H1 (cell line): ENCODE measurements at regions of chr17 and their contacts with region 1.

Region 1: DNA sequence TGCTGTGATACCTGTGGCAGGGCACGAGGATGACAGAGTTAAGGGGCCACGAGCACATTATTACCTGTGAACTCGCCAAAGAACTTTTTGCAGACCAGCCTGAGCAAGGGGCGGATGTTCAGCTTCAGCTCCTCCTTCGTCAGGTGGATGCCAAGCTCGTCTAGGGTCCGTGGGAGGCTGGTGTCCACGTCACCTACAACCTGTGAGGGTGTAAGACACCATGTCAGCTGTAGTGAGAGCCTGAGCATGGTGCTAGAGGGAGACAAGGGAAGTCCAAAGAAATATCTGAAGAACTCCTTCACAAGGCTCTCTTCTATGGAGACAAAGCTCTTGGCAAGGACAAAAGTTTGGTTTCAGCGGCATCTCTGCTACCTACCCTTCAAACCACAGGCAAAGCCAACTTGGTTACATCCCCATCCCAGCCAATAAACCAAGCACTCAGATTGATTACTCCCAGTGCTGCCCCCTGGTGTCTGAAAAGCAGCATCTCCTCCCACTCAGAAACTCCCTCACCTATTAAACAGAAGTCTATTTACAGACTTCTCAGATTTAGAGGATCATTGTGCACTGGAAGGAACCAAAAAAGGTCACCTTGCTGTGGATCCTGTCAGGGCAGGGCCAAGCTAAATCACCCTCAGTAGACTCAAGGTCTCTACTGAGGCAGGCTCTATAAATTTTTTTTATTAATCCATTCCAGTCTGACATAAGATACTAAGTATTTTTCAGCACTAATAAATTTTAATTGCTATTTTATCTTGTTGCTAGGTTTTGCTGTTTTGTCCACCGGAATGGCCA is 17.4 kb downstream of the HIGD1B start:
- DNase-seq: peak; percentile 15 to 83
- H3K4me3 ChIP-seq: no peak overlapping the region
- H3K27ac ChIP-seq: no peak overlapping the region
- H3K4me1 ChIP-seq: no peaks in the 10 kb centered on the region
- H3K27me3 ChIP-seq: no peaks in the 10 kb centered on the region
- CTCF ChIP-seq: peak; percentile 46 to 86 (median 78)
- EP300 ChIP-seq: no peak
- POLR2A ChIP-seq: no peak
- RAD21 ChIP-seq: peak; percentile 71 to 79

Region 2: GRCh38 chr17:44794851-44795413 is 70.1 kb before region 1 on chr17:
- CTCF ChIA-PET with region 1: interaction called, 17 read pairs
- POLR2A ChIA-PET with region 1: interaction called, 3 read pairs
- DNase-seq: no peak
- H3K4me3 ChIP-seq: no peak overlapping the region
- H3K27ac ChIP-seq: no peak overlapping the region
- H3K4me1 ChIP-seq: peaks cover 0 to 3% (median 1%) of the 10 kb centered on the region in 4 experiments; a peak in 2 of 7 replicates
- H3K27me3 ChIP-seq: no peaks in the 10 kb centered on the region
- CTCF ChIP-seq: no peak
- EP300 ChIP-seq: no peak
- POLR2A ChIP-seq: no peak
- RAD21 ChIP-seq: no peak

Region 3: GRCh38 chr17:44844390-44844830 is 20.7 kb before region 1 on chr17:
- CTCF ChIA-PET with region 1: interaction called, 142 read pairs
- POLR2A ChIA-PET with region 1: interaction called, 15 read pairs
- DNase-seq: no peak
- H3K4me3 ChIP-seq: no peak overlapping the region
- H3K27ac ChIP-seq: no peak overlapping the region
- H3K4me1 ChIP-seq: peaks cover 6 to 22% (median 11%) of the 10 kb centered on the region in 4 experiments
- H3K27me3 ChIP-seq: no peaks in the 10 kb centered on the region
- CTCF ChIP-seq: peak in 1 of 3 experiments; percentile 14; a peak in 1 of 4 replicates
- EP300 ChIP-seq: no peak
- POLR2A ChIP-seq: no peak
- RAD21 ChIP-seq: peak in 1 of 2 experiments; percentile 25; a peak in 1 of 4 replicates

Region 4: DNA sequence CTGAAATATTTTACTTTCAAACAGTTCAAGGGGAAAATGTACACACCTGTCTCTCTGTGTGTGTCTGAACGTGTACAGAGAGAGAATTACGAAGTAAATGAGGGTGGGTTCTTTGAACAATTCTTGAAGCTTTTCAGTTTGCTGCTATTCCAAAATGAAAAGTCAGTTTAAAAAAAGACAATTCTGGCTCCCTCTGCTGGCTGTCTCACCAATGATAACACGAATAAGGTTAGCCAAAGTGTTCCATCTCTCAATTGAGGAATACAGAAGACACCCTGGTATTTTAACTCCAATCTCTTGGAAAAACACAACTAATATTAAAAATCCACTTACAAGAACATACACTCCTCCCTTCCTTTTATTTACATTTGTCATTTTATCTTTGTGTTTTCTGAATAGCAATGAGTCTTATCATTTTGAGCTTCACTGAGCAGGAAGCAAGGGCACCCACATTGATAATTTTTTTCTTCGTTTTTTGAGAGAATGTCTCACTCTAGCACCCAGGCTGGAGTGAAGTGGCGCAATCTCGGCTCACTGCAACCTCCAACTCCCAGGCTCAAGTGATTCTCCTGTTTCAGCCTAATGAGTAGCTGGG is 13.7 kb after region 1 on chr17:
- CTCF ChIA-PET with region 1: interaction called, 154 read pairs
- POLR2A ChIA-PET with region 1: interaction called, 12 read pairs
- DNase-seq: no peak
- H3K4me3 ChIP-seq: no peak overlapping the region
- H3K27ac ChIP-seq: no peak overlapping the region
- H3K4me1 ChIP-seq: no peaks in the 10 kb centered on the region
- H3K27me3 ChIP-seq: no peaks in the 10 kb centered on the region
- CTCF ChIP-seq: peak in 2 of 3 experiments; percentile 39 to 61; a peak in 2 of 4 replicates
- EP300 ChIP-seq: no peak
- POLR2A ChIP-seq: no peak
- RAD21 ChIP-seq: peak; percentile 41 to 44